Panc1 (cell line): ENCODE measurements at regions of chr6 and their contacts with region 1.

Region 1: GRCh38 chr6:18883851-18884250 is 496.7 kb downstream of the RNF144B start:
- DNase-seq: no peak
- ATAC-seq: no peak
- H3K4me3 ChIP-seq: no peak overlapping the region
- H3K27ac ChIP-seq: no peak overlapping the region
- H3K4me1 ChIP-seq: no peaks in the 10 kb centered on the region
- H3K27me3 ChIP-seq: no peaks in the 10 kb centered on the region
- CTCF ChIP-seq: no peak

Region 2: DNA sequence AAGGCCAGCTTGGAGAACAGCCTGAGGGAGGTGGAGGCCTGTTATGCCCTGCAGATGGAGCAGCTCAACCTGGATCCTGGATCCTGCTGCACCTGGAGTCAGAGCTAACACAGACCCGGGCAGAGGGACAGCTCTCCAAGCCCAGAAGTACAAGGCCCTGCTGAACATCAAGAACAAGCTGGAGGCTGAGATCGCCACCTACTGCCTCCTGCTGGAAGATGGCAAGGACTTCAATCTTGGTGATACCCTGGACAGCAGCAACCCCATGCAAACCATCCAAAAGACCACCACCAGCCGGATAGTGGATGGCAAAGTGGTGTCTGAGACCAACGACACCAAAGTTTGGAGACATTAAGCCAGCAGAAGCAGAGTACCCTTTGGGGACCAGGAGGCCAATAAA is 729.8 kb after region 1 on chr6:
- CTCF ChIA-PET with region 1: interaction called, 11 read pairs
- POLR2A ChIA-PET with region 1: no interaction called
- in situ Hi-C with region 1: no loop called
- intact Hi-C with region 1: no loop called
- DNase-seq: no peak
- ATAC-seq: no peak
- H3K4me3 ChIP-seq: no peak overlapping the region
- H3K27ac ChIP-seq: no peak overlapping the region
- H3K4me1 ChIP-seq: no peaks in the 10 kb centered on the region
- H3K27me3 ChIP-seq: no peaks in the 10 kb centered on the region
- CTCF ChIP-seq: no peak